HepG2 (cell line): ENCODE measurements at regions of chr16 and their contacts with region 1.

Region 1: GRCh38 chr16:75148311-75149195 is at the start of gene ZFP1:
- DNase-seq: peak; percentile 91
- ATAC-seq: peak; percentile 93
- H3K4me3 ChIP-seq: peak within 1 kb of the TSS; percentile 94 to 98 (median 96)
- H3K27ac ChIP-seq: peak within 1 kb of the TSS; percentile 84
- H3K4me1 ChIP-seq: peaks cover 23% of the 10 kb centered on the region
- H3K27me3 ChIP-seq: no peaks in the 10 kb centered on the region
- CTCF ChIP-seq: peak; percentile 23; the same call in 1 of the 2 replicates
- EP300 ChIP-seq: peak; percentile 28 to 70; a peak in 2 of 4 replicates
- POLR2A ChIP-seq: peak; percentile 43 to 85; a peak in 3 of 4 replicates
- RAD21 ChIP-seq: peak; percentile 55
- total RNA-seq, gene ZFP1: 14.0 and 18.8 TPM in 2 replicates

Region 2: GRCh38 chr16:75116081-75116910 is 32.3 kb before region 1 on chr16 and contains the start of gene LDHD:
- CTCF ChIA-PET with region 1: no interaction called
- POLR2A ChIA-PET with region 1: no interaction called
- in situ Hi-C with region 1: no loop called
- intact Hi-C with region 1: loop called (anchors 1 kb)
- DNase-seq: peak; percentile 86
- ATAC-seq: peak; percentile 93
- H3K4me3 ChIP-seq: peak within 1 kb of the TSS; percentile 56 to 83 (median 59)
- H3K27ac ChIP-seq: peak within 1 kb of the TSS; percentile 48
- H3K4me1 ChIP-seq: peaks cover 78% of the 10 kb centered on the region
- H3K27me3 ChIP-seq: no peaks in the 10 kb centered on the region; a peak in 1 of 5 replicates
- CTCF ChIP-seq: peak; percentile 49; the same call in 1 of the 2 replicates
- EP300 ChIP-seq: peak; percentile 51 to 52; a peak in 2 of 4 replicates
- POLR2A ChIP-seq: peak; percentile 90 to 96
- RAD21 ChIP-seq: no peak; the same call in 1 of the 2 replicates
- total RNA-seq, gene LDHD: 9.1 and 9.3 TPM in 2 replicates

Region 3: GRCh38 chr16:75129491-75130149 is 18.9 kb before region 1 on chr16:
- CTCF ChIA-PET with region 1: no interaction called
- POLR2A ChIA-PET with region 1: no interaction called
- in situ Hi-C with region 1: no loop called
- intact Hi-C with region 1: loop called (anchors 2 kb)
- DNase-seq: peak; percentile 91
- ATAC-seq: peak; percentile 84
- H3K4me3 ChIP-seq: peak overlapping the region in 1 of 3 experiments; percentile 23; a peak in 1 of 6 replicates
- H3K27ac ChIP-seq: peak overlapping the region; percentile 76
- H3K4me1 ChIP-seq: peaks cover 46% of the 10 kb centered on the region
- H3K27me3 ChIP-seq: no peaks in the 10 kb centered on the region
- CTCF ChIP-seq: no peak
- EP300 ChIP-seq: peak in 1 of 2 experiments; percentile 62; a peak in 2 of 4 replicates
- POLR2A ChIP-seq: no peak
- RAD21 ChIP-seq: no peak